ENCODE measurements at regions of chr3 and their contacts with region 1.

Region 1: DNA sequence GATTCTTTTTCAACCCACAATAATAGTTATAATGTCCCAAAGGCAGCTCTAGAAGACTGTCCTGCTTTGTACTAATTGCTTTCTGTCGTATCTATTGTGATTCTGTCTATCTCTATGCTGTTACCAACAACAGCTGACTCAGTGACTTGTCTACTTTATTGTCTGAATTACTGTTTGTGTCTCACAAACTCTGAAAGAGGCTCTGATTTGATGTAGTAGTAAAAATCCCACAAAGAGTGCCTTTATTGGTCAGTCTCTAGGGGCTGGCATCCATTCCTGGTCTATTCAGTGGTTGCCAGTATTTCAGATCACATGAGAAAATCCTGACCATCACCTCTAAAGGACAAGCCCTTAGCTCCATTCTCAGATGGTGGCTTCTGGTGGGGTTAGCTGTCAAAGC is 254.2 kb downstream of the NSUN3 start:
- DNase-seq: no peak
- H3K4me3 ChIP-seq: no peak overlapping the region
- H3K27ac ChIP-seq: no peak overlapping the region
- H3K4me1 ChIP-seq: peaks cover 0 to 2% (median 1%) of the 10 kb centered on the region in 4 donors
- H3K27me3 ChIP-seq: no peaks in the 10 kb centered on the region
- CTCF ChIP-seq: no peak
- EP300 ChIP-seq: no peak
- POLR2A ChIP-seq: no peak

Region 2: GRCh38 chr3:94481226-94481898 is 164.3 kb after region 1 on chr3:
- intact Hi-C with region 1: loop called (anchors 10 kb)
- DNase-seq: no peak
- H3K4me3 ChIP-seq: no peak overlapping the region
- H3K27ac ChIP-seq: no peak overlapping the region
- H3K4me1 ChIP-seq: peaks cover 0 to 15% (median 2%) of the 10 kb centered on the region in 4 donors
- H3K27me3 ChIP-seq: no peaks in the 10 kb centered on the region
- CTCF ChIP-seq: no peak
- EP300 ChIP-seq: no peak
- POLR2A ChIP-seq: no peak

Measured in sigmoid colon (tissue), 7 donors.